Heart left ventricle (tissue), 16 donors: ENCODE measurements at regions of chr16 and their contacts with region 1.

Region 1: GRCh38 chr16:85717393-85718121 is 28.8 kb upstream of the GINS2 start:
- DNase-seq: peak; percentile 60 to 78 (median 62)
- ATAC-seq: peak; percentile 58 to 61 (median 60)
- H3K4me3 ChIP-seq: no peak overlapping the region
- H3K27ac ChIP-seq: no peak overlapping the region
- H3K4me1 ChIP-seq: peaks cover 0 to 33% (median 8%) of the 10 kb centered on the region in 12 donors
- H3K27me3 ChIP-seq: no peaks in the 10 kb centered on the region
- CTCF ChIP-seq: peak; percentile 64 to 84 (median 79)
- POLR2A ChIP-seq: no peak

Region 2: DNA sequence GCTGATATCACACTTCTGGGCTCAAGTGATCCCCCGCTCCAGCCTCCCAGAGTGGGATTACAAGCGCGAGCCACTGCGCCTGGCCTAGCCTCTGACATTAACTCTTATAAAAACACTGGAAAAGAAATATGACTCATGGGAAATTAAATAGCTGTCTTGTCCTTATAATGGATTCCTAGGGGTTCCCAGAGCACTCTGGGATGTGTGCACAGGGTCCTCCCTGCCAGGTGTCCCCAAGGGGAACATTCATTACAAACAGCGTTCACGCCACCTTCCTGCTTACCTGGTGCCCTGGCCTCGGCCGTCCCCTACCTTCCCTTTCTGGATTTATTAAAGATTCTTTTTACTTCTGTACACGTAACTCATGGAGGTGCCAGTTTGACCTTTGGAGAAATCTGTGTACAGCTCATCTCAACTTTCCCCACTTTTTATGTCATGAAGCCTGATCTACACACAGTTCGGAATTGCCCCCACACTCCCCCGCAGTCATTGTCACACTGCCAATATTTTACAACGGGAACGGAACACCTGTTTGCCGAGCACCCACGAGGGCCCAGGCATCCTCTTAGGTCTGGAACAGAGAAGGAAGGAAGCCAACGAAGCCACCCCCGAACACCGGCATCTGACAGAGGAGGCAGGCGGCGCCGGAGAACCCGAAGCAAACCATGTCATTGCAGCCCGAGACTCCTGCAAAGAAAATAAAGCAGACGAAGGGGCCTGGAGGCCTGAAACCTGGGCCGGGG is 1173.4 kb before region 1 on chr16:
- intact Hi-C with region 1: no loop called
- DNase-seq: peak in 1 of 5 donors; percentile 24
- ATAC-seq: peak in 1 of 4 donors; percentile 56
- H3K4me3 ChIP-seq: no peak overlapping the region
- H3K27ac ChIP-seq: no peak overlapping the region
- H3K4me1 ChIP-seq: peaks cover 0 to 16% (median 0%) of the 10 kb centered on the region in 12 donors
- H3K27me3 ChIP-seq: peaks cover 0 to 10% (median 0%) of the 10 kb centered on the region in 9 donors
- CTCF ChIP-seq: no peak
- POLR2A ChIP-seq: no peak

Region 3: GRCh38 chr16:85104821-85105391 is 612.7 kb before region 1 on chr16:
- intact Hi-C with region 1: loop called in 3 of 10 experiments (anchors 10 kb)
- DNase-seq: no peak
- ATAC-seq: peak in 3 of 4 donors; percentile 34 to 57 (median 47)
- H3K4me3 ChIP-seq: no peak overlapping the region
- H3K27ac ChIP-seq: peak overlapping the region in 1 of 12 donors; percentile 28
- H3K4me1 ChIP-seq: peaks cover 0 to 30% (median 0%) of the 10 kb centered on the region in 12 donors
- H3K27me3 ChIP-seq: no peaks in the 10 kb centered on the region
- CTCF ChIP-seq: no peak
- POLR2A ChIP-seq: no peak

Region 4: DNA sequence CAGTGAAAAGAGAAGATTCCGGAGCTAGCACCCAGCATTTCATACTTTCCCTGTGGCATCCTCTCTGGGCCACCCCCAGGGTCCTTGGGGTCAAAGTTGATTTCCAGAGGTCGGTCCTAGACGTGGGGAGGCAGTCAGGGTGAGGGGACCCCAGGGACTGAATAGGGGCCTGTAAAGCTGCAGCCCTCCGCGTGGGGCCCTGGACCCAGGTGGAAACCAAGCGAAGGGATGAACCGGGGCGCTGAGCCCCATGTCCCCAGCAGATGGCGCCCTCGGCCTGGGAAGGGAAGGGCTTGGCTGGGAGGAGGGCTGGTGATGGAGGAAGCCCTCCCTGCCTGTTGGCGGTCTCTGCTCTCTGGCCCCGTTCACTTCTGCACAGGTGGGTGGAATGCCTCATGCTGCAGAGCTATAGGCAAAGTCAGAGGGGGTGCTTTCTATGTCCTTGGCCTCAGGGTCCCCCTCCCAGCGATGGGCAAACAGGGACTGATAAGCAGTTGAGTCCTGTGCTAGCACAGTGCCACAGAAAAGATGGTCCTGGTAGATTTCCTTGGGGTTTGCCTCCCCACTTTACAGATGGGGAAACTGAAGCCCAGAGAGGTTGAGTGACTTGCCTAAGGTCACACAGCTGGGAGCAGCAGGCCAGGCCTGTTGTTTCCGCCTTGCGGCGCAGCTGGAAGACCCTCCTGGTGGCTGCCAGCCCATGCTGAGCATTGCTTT is 441.9 kb before region 1 on chr16:
- intact Hi-C with region 1: loop called in 5 of 10 experiments (anchors 2 to 10 kb)
- DNase-seq: peak; percentile 60 to 85 (median 65)
- ATAC-seq: peak; percentile 42 to 80 (median 72)
- H3K4me3 ChIP-seq: no peak overlapping the region
- H3K27ac ChIP-seq: no peak overlapping the region
- H3K4me1 ChIP-seq: peaks cover 0 to 8% (median 0%) of the 10 kb centered on the region in 12 donors
- H3K27me3 ChIP-seq: no peaks in the 10 kb centered on the region
- CTCF ChIP-seq: peak; percentile 82 to 93 (median 89)
- POLR2A ChIP-seq: no peak

Region 5: GRCh38 chr16:85393674-85394483 is 323.7 kb before region 1 on chr16:
- intact Hi-C with region 1: loop called in 3 of 10 experiments (anchors 5 to 10 kb)
- DNase-seq: peak; percentile 62 to 85 (median 65)
- ATAC-seq: peak in 2 of 4 donors; percentile 24 to 48
- H3K4me3 ChIP-seq: no peak overlapping the region
- H3K27ac ChIP-seq: peak overlapping the region in 1 of 12 donors; percentile 87
- H3K4me1 ChIP-seq: peaks cover 8 to 41% (median 25%) of the 10 kb centered on the region in 12 donors
- H3K27me3 ChIP-seq: no peaks in the 10 kb centered on the region
- CTCF ChIP-seq: peak; percentile 79 to 92 (median 86)
- POLR2A ChIP-seq: no peak

Region 6: GRCh38 chr16:85659805-85660495 is 57.6 kb before region 1 on chr16:
- intact Hi-C with region 1: loop called in 8 of 10 experiments (anchors 2 to 5 kb)
- DNase-seq: peak; percentile 66 to 85 (median 73)
- ATAC-seq: peak; percentile 87 to 95 (median 90)
- H3K4me3 ChIP-seq: no peak overlapping the region
- H3K27ac ChIP-seq: peak overlapping the region in 9 of 12 donors; percentile 13 to 67 (median 38)
- H3K4me1 ChIP-seq: peaks cover 0 to 18% (median 9%) of the 10 kb centered on the region in 12 donors
- H3K27me3 ChIP-seq: no peaks in the 10 kb centered on the region
- CTCF ChIP-seq: peak; percentile 86 to 97 (median 90)
- POLR2A ChIP-seq: no peak

Region 7: DNA sequence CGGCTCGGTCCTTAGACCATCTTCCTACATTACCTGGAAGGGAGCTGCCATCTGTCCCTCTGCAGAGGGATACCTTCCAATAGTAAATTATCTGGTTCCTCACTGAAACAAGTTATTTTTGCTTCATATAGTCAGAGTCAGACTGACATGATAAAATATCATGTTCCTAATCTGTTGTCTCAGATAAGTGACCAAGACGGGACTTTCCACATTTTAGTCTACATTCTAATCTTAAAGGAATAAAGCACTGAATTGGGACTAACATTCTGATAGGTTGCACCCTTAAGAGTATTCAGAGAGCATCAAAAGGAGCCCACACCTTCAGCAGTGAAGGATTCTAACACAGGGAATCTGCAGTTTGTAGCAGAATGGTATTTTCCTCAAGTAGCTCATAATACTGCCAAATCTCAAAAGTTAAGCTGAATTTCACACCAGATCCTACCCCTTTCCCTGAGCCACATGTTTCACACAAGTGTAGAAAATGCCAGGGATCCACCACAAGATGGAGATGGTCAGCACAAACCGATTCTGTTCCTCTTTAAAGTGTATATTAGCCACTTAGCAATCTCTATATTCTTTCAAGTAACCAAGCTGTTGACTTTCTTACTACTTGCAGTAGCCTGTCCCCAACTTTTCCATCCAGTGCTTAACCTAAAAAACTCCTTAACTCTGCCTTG is 42.2 kb before region 1 on chr16:
- intact Hi-C with region 1: loop called in 2 of 10 experiments (anchors 5 kb)
- DNase-seq: no peak
- ATAC-seq: no peak
- H3K4me3 ChIP-seq: no peak overlapping the region
- H3K27ac ChIP-seq: peak overlapping the region in 1 of 12 donors; percentile 78
- H3K4me1 ChIP-seq: peaks cover 0 to 22% (median 12%) of the 10 kb centered on the region in 12 donors
- H3K27me3 ChIP-seq: no peaks in the 10 kb centered on the region
- CTCF ChIP-seq: peak in 10 of 12 donors; percentile 7 to 52 (median 26)
- POLR2A ChIP-seq: no peak

Region 8: DNA sequence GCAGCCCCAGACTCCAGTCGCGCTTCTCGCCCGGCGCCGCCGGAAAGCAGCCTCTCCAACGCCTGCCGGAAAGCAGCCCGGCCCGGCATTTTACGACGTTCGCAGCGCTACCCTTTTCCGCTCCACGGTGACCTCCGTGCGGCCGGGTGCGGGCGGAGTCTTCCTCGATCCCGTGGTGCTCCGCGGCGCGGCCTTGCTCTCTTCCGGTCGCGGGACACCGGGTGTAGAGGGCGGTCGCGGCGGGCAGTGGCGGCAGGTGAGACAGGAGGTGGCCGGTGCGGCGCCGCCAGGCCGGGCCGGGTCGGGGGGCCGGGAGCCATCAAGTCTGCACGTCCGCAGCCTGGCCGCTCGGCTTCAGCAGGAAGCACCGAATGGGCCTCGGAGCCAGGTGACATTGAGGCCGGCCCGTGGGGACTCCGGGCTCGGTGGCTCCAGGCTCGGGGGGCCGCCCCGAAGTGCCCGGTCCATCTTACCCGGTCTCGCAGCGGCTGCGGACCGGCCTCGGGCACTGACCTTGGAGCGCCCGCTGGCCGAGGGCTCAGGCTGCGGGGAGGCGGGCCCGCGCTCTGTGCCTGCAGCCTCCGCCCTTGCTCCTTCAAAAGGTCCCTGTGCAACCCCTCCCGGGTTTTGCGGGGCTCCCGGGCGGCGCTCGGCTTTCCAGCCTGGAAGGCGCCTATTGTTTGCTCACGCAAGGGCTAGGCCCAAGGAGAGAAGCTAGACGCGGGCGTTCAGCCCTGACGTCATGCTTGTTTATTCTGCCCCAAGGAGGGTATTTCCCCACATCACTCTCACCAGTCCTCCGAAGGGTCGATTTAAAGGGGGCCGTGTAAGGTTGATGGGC is 82.2 kb after region 1 on chr16 and contains the starts of genes COX4I1 and EMC8:
- intact Hi-C with region 1: no loop called
- DNase-seq: peak; percentile 97 to 98 (median 97)
- ATAC-seq: peak; percentile 92 to 98 (median 98)
- H3K4me3 ChIP-seq: peak within 1 kb of the TSS; percentile 78 to 99 (median 92)
- H3K27ac ChIP-seq: peak within 1 kb of the TSS; percentile 88 to 99 (median 97)
- H3K4me1 ChIP-seq: peaks cover 0 to 63% (median 30%) of the 10 kb centered on the region in 12 donors
- H3K27me3 ChIP-seq: no peaks in the 10 kb centered on the region
- CTCF ChIP-seq: no peak
- POLR2A ChIP-seq: peak; percentile 56 to 86
- total RNA-seq, gene COX4I1: 1,047 to 2,365 (median 1,785) TPM
- total RNA-seq, gene EMC8: 20.7 to 39.1 (median 24.4) TPM

Region 9: DNA sequence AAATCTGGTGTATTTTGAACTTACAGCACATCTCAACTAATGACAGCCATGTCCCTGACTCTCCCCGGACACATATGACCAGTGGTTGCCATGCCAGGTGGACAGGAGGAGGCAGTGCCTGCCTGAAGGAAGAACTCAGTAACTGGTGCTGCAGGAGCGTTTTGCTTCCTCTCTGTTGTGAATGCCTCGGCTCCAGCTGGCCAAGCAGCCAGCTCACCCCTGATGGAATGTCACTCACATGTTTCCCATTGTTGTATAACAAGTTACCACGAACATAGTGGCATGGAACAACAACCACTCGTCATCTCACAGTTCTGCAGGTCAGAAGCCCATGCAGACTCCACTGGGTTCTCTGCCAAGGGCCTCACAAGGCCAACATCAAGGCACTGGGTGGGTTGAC is 161.3 kb after region 1 on chr16:
- intact Hi-C with region 1: no loop called
- DNase-seq: peak in 1 of 5 donors; percentile 36
- ATAC-seq: peak; percentile 42 to 68 (median 49)
- H3K4me3 ChIP-seq: no peak overlapping the region
- H3K27ac ChIP-seq: no peak overlapping the region
- H3K4me1 ChIP-seq: peaks cover 0 to 6% (median 0%) of the 10 kb centered on the region in 12 donors
- H3K27me3 ChIP-seq: peaks cover 0 to 9% (median 0%) of the 10 kb centered on the region in 9 donors
- CTCF ChIP-seq: no peak
- POLR2A ChIP-seq: no peak